ENCODE measurements at regions of chr5 and their contacts with region 1.

Region 1: GRCh38 chr5:177296581-177296980 is 6.9 kb downstream of the RAB24 start:
- DNase-seq: no peak
- H3K4me3 ChIP-seq: no peak overlapping the region
- H3K27ac ChIP-seq: peak overlapping the region in 1 of 4 donors; percentile 55
- H3K4me1 ChIP-seq: peaks cover 25 to 48% (median 31%) of the 10 kb centered on the region in 4 donors
- H3K27me3 ChIP-seq: no peaks in the 10 kb centered on the region
- CTCF ChIP-seq: no peak
- EP300 ChIP-seq: no peak
- POLR2A ChIP-seq: no peak

Region 2: GRCh38 chr5:177113566-177114424 is 182.8 kb before region 1 on chr5:
- in situ Hi-C with region 1: loop called in 1 of 4 experiments (anchors 25 kb)
- intact Hi-C with region 1: no loop called
- DNase-seq: peak; percentile 81
- H3K4me3 ChIP-seq: no peak overlapping the region
- H3K27ac ChIP-seq: peak overlapping the region in 2 of 4 donors; percentile 26 to 41
- H3K4me1 ChIP-seq: peaks cover 0 to 20% (median 8%) of the 10 kb centered on the region in 4 donors
- H3K27me3 ChIP-seq: no peaks in the 10 kb centered on the region
- CTCF ChIP-seq: peak; percentile 96 to 99 (median 98)
- EP300 ChIP-seq: no peak
- POLR2A ChIP-seq: no peak

Region 3: GRCh38 chr5:177212242-177212641 is 84.3 kb before region 1 on chr5:
- in situ Hi-C with region 1: no loop called
- intact Hi-C with region 1: no loop called
- DNase-seq: no peak
- H3K4me3 ChIP-seq: no peak overlapping the region
- H3K27ac ChIP-seq: no peak overlapping the region
- H3K4me1 ChIP-seq: no peaks in the 10 kb centered on the region
- H3K27me3 ChIP-seq: no peaks in the 10 kb centered on the region
- CTCF ChIP-seq: no peak
- EP300 ChIP-seq: no peak
- POLR2A ChIP-seq: no peak